ENCODE measurements at regions of chr7 and their contacts with region 1.

Region 1: GRCh38 chr7:101212014-101212557 is 5.3 kb downstream of the PLOD3 start:
- DNase-seq: no peak
- ATAC-seq: no peak
- H3K4me3 ChIP-seq: no peak overlapping the region
- H3K27ac ChIP-seq: no peak overlapping the region
- H3K4me1 ChIP-seq: peaks cover 0 to 23% (median 11%) of the 10 kb centered on the region in 12 donors
- H3K27me3 ChIP-seq: no peaks in the 10 kb centered on the region
- CTCF ChIP-seq: no peak
- POLR2A ChIP-seq: no peak

Region 2: DNA sequence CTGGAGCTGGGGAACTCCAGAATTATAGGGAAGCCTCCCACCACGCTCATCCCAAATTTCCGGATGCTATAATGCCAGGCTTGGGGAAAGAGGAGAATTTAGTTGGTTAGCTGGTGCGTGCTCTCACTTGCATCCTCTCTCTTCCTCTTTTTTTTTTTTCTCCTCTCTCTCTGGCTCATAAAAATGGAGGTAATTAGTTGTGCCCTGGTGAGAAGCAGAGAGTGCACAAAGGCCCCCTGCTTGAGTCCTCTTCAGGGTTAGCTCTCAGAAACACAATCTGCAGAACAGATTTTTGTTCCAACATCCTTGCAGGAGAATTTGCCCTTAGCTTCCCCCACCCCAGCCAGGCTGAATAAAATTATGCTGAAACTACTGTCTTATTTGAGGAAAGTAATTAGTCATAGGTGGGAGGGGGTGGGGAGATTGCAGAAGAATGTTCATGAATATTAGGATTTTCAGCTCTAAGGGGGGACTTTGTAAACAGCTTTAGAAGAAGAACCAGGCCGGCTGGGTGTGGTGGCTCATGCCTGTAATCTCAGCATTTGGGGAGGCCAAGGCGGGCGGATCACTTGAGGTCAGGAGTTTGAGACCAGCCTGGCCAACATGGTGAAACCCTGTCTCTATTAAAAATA is 77.6 kb before region 1 on chr7:
- intact Hi-C with region 1: no loop called
- DNase-seq: no peak
- ATAC-seq: no peak
- H3K4me3 ChIP-seq: no peak overlapping the region
- H3K27ac ChIP-seq: no peak overlapping the region
- H3K4me1 ChIP-seq: peaks cover 0 to 21% (median 10%) of the 10 kb centered on the region in 12 donors
- H3K27me3 ChIP-seq: no peaks in the 10 kb centered on the region
- CTCF ChIP-seq: no peak
- POLR2A ChIP-seq: no peak

Region 3: DNA sequence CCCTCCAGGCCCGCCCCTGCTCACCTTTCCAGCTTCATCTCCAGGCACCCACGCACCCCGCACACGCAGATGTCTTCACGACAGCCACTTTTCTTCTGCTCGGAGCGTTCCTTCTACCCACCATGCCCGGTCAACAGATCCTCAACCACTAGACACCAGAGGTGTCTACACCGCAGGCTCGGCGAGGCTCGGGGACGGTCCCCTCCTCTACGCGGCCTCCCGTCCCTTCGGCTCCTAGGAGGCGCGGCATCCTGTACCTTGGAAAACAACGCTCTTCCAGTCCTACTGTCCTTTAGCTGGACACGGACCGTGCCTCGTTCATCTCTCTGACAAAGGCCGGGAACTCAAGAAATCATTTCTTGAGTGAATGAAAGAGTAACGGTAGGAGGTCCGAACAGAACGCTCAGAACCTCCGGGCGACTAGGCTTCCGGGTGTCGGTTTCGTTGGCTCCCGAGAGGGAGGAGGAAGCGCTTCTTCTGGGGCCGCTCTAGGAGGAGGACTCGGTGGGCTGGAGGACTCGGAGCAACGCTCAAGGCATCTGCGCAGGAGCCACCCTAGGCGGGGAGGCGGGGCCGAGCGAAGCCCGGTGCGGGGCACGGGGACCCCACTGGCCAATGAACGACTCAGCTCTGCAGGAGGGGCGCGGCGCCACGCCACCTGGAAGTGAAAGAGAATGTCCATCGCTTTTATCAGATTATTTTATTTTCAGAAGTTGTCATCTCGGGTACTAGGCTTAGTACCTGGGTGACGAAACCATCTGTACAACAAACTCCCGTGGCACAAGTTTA is 40.0 kb after region 1 on chr7:
- intact Hi-C with region 1: loop called in 4 of 10 experiments (anchors 5 kb)
- DNase-seq: peak; percentile 96 to 99 (median 99)
- ATAC-seq: peak; percentile 100
- H3K4me3 ChIP-seq: peak overlapping the region; percentile 66 to 98 (median 87)
- H3K27ac ChIP-seq: peak overlapping the region in 11 of 12 donors; percentile 17 to 81 (median 67)
- H3K4me1 ChIP-seq: peaks cover 3 to 24% (median 17%) of the 10 kb centered on the region in 12 donors
- H3K27me3 ChIP-seq: no peaks in the 10 kb centered on the region
- CTCF ChIP-seq: peak in 1 of 12 donors; percentile 9
- POLR2A ChIP-seq: peak in 1 of 2 donors; percentile 47